Astrocyte of the cerebellum (primary cell): ENCODE measurements at regions of chr4 and their contacts with region 1.

Region 1: DNA sequence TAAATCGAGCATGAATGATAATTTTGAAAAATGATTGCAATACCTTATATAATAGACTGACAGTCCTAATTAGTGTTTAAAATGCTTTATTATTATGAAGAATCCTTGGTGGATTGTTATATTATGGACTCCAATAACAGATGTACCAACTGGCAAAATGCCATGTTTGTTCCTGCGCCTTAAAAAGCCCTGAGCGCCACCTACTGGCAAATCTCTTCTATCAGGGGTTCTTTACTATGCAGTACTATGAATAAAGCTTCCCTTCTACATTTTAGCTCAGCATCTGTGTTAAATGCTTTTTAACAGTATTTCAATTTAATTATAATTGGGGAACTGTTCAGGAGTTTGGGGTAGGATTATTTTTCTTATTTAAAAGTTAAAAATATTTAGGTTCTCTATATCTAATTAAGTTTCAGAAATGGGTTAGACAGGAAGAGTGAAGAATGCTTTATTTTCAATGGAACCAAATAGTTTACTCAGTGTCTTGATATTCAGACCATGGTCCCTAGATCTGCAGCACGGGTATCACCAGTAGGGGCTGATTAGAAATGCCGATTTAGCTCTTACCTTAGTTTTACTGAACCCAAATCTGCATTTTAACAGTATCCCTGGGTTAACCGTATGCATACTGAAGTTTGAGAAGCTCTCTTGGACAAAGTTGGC is 20.1 kb downstream of the CFAP97 start:
- DNase-seq: peak; percentile 92
- H3K4me3 ChIP-seq: no peak overlapping the region
- CTCF ChIP-seq: peak; percentile 81

Region 2: DNA sequence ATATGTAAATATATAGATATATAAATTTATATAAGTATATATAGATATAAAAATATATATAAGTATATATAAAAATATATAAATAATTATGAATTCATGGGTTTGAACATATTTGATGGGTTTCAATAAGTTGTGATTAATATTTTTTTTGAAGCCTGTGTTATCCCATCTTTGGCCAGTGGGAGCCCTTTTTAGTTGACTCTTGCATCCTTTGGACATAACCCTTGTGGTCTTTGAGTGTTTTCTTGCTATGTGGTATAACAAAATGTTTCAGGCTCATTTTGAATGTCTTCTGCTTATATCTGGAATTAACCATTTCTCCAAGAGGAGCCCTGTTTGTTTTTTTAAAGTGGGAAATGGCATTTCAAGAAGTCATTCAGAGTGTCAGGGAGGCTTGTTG is 40.8 kb after region 1 on chr4:
- in situ Hi-C with region 1: no loop called
- DNase-seq: no peak
- H3K4me3 ChIP-seq: no peak overlapping the region
- CTCF ChIP-seq: peak; percentile 3

Region 3: GRCh38 chr4:185235843-185236503 is 52.2 kb after region 1 on chr4:
- in situ Hi-C with region 1: loop called (anchors 5 kb)
- DNase-seq: no peak
- H3K4me3 ChIP-seq: no peak overlapping the region
- CTCF ChIP-seq: no peak

Region 4: DNA sequence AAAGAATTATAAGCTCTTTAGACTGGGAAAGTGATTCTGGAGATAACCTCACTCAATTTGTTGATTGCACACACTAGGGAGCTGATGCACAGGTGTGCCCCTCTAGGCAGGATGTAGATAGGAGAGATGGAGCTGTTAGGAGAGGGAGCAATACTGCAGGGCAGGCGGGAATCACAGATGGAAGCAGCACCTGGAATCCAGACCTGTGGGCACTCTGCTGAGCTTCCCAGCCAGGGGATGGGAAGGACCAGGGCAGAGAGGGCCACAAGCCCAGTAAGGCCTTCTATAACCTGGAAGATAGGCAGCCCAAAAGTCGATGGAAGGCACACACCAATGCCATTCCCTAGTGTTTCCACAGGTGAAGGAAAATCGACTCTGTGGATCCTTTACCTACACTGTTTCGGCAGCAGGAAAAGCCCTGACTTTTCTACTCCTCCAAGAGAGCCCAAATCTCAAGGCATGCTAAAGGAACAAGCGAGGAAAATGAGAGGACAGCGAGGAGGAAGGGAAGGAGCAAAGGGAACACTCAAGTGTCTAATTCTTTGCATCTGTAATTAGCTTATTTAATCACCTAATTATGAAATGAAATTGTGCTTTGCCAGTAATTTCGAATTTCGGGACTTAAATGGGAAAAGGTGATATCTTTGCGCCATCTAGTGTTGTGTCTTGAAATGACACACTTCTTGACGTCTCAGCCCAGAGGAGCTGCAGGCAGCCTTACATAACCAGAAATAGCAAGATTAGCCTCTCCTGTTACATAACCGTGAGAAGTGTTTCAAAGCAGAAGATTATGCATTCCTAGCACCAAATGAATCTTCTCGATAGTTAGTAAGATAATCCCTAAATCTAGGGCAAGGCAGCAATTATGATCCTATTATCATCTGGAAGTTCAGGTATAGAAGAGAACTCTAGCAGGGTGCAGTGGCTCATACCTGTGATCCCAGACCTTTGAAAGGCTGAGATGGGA is 854.2 kb after region 1 on chr4:
- in situ Hi-C with region 1: loop called (anchors 25 kb)
- DNase-seq: peak; percentile 79
- H3K4me3 ChIP-seq: no peak overlapping the region
- CTCF ChIP-seq: peak; percentile 62